A673 (cell line): ENCODE measurements at regions of chr11 and their contacts with region 1.

Region 1: GRCh38 chr11:18115360-18116127 is 9.7 kb upstream of the SAAL1 start:
- DNase-seq: peak; percentile 67
- H3K4me3 ChIP-seq: no peak overlapping the region
- H3K27ac ChIP-seq: no peak overlapping the region
- H3K4me1 ChIP-seq: no peaks in the 10 kb centered on the region
- H3K27me3 ChIP-seq: peaks cover 25% of the 10 kb centered on the region
- CTCF ChIP-seq: peak; percentile 83

Region 2: GRCh38 chr11:18191376-18191775 is 75.8 kb after region 1 on chr11:
- CTCF ChIA-PET with region 1: no interaction called
- POLR2A ChIA-PET with region 1: interaction called, 15 read pairs
- intact Hi-C with region 1: no loop called
- DNase-seq: no peak
- H3K4me3 ChIP-seq: no peak overlapping the region
- H3K27ac ChIP-seq: no peak overlapping the region
- H3K4me1 ChIP-seq: no peaks in the 10 kb centered on the region
- H3K27me3 ChIP-seq: peaks cover 8% of the 10 kb centered on the region
- CTCF ChIP-seq: no peak

Region 3: DNA sequence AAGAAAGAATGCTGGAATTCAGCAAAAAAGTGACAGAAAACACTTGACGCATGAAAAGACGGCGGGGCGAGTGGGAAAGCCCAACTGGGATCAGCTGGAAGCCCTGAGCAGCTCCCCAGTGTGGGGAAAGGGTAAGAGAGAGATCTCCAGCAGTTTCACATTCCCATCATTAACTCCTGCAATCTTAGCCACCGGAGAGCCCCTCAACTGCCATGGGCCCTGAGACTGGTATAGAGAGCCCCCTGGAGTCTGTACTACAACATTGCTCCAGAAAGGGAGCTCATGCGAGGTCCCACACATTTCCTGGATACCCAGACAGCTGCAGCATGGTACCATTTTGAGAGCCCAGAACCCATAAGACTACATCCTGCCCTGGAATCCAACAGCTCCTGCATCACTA is 88.2 kb after region 1 on chr11:
- CTCF ChIA-PET with region 1: interaction called, 17 read pairs
- POLR2A ChIA-PET with region 1: no interaction called
- intact Hi-C with region 1: loop called (anchors 5 kb)
- DNase-seq: peak; percentile 58
- H3K4me3 ChIP-seq: no peak overlapping the region
- H3K27ac ChIP-seq: no peak overlapping the region
- H3K4me1 ChIP-seq: no peaks in the 10 kb centered on the region
- H3K27me3 ChIP-seq: no peaks in the 10 kb centered on the region
- CTCF ChIP-seq: peak; percentile 64

Region 4: GRCh38 chr11:18395735-18396504 is 280.4 kb after region 1 on chr11:
- CTCF ChIA-PET with region 1: interaction called, 11 read pairs
- POLR2A ChIA-PET with region 1: no interaction called
- intact Hi-C with region 1: no loop called
- DNase-seq: peak; percentile 99
- H3K4me3 ChIP-seq: peak overlapping the region; percentile 98
- H3K27ac ChIP-seq: peak overlapping the region; percentile 98
- H3K4me1 ChIP-seq: peaks cover 13% of the 10 kb centered on the region
- H3K27me3 ChIP-seq: no peaks in the 10 kb centered on the region
- CTCF ChIP-seq: no peak

Region 5: DNA sequence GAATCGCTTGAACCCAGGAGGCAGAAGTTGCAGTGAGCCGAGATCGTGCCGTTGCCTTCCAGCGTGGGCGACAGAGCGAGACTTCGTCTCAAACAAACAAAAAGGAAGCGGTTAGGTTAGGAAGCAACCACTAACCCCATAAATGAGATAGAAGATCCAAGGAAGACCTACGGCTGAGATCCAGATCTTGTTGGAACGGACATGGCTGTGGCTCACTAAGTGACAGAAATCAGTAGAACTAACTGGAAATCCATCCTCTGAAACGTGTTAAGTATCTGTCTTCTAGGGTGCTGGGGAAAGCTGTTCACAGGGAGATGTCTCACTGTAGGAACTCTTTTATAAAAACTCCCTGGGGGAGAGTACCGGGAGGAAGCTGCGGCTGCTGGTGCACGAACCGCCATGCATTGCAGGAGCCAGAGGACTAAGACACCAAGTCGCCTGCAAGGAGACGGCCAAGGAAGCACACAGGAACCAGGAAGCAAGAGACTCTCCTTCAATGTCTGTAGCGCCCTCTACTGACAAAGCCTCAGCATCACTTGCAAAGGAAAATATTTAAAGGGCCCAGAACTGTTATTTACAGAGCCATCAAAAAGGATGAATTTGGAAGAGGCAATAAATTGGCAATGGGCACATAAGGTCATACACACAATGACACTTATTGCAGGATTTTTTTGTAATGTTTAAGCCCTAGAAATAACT is 535.5 kb after region 1 on chr11:
- CTCF ChIA-PET with region 1: no interaction called
- POLR2A ChIA-PET with region 1: no interaction called
- intact Hi-C with region 1: loop called (anchors 10 kb)
- DNase-seq: peak; percentile 80
- H3K4me3 ChIP-seq: no peak overlapping the region
- H3K27ac ChIP-seq: no peak overlapping the region
- H3K4me1 ChIP-seq: no peaks in the 10 kb centered on the region
- H3K27me3 ChIP-seq: no peaks in the 10 kb centered on the region
- CTCF ChIP-seq: peak; percentile 67

Region 6: DNA sequence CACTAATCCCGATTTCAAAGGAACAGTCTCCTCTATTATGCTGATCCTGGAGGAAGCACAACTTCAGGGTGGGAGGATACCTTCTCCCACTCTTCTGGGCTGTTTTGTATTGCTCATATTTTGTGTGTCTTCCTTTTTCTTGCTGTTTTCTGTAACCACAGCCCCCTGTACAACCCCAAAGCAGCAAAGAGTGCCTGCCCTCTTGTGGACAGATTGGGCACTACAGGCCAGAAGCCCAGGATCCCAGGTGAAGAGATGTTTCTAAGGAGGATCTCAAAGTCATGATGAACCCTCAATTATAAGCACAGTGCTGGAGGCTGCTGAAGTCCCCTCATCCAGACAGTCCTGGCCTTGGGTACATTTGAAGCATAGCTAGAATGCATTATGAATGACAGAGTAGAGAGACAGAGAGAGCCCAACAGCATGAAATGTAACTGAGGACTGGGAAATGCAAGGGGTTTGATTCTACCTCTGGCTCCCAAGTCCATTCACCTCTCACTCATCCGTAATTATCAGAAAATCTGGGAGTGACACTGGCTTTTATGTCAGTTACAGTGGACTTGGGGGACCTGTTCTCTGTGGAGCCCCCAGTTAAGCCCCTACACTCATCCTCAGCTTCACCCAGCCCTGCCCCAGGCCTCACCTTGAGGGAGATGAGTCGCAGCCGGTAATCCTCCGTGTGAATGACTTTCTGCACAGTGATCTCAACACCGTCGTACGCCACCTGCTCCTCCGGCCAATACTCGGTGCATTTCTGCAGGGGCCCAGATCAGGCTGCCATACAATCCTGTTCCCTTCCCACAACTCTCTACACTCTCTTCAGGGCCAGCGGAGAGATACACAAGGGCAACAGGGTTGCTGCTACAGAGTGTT is 616.6 kb after region 1 on chr11:
- CTCF ChIA-PET with region 1: no interaction called
- POLR2A ChIA-PET with region 1: no interaction called
- intact Hi-C with region 1: loop called (anchors 5 kb)
- DNase-seq: peak; percentile 52
- H3K4me3 ChIP-seq: no peak overlapping the region
- H3K27ac ChIP-seq: no peak overlapping the region
- H3K4me1 ChIP-seq: no peaks in the 10 kb centered on the region
- H3K27me3 ChIP-seq: no peaks in the 10 kb centered on the region
- CTCF ChIP-seq: peak; percentile 88

Region 7: DNA sequence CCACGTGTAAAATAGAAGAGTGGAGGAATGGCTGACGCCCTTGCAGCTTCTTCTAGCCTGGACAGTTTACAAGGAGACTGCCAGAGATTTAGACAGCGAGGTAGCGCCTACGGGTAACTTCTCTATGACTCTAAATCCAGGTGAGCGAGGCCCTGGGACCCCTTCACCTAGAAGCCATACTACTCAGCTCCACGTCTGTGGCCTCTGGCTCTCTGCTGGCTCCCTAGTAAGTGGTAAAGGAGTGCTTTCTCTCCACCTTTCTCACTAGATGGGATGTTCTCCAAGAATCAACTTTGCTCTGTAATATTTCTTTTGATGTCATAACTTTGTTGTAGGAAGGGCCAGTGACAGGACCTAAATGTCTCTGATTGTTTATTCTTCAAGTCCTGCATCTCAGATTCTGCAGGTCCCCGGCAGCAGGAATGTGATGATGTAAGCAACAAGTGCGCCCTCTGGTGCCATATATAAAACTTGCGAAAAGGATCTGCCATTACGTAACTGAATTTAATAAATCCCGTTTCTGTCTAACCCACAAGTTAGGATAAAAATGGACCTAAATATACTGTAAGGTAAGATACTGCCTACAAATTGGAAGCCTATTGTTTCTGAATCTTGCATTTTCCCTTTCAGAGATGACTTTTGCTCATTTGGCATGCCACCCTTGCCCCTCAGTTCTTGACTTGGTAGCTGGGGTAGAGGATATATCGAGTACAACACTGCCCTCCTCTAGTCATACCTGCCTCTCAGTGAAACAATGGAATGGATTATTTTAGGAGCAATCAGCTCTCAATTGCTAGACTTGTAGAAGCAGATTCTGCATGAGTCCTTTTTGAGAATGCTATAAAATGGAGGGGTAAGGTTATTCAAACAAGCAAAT is 687.1 kb after region 1 on chr11:
- CTCF ChIA-PET with region 1: no interaction called
- POLR2A ChIA-PET with region 1: no interaction called
- intact Hi-C with region 1: loop called (anchors 10 kb)
- DNase-seq: peak; percentile 72
- H3K4me3 ChIP-seq: no peak overlapping the region
- H3K27ac ChIP-seq: no peak overlapping the region
- H3K4me1 ChIP-seq: no peaks in the 10 kb centered on the region
- H3K27me3 ChIP-seq: no peaks in the 10 kb centered on the region
- CTCF ChIP-seq: peak; percentile 70